CD4-positive, alpha-beta memory T cell (primary cell): ENCODE measurements at regions of chr6 and their contacts with region 1.

Region 1: DNA sequence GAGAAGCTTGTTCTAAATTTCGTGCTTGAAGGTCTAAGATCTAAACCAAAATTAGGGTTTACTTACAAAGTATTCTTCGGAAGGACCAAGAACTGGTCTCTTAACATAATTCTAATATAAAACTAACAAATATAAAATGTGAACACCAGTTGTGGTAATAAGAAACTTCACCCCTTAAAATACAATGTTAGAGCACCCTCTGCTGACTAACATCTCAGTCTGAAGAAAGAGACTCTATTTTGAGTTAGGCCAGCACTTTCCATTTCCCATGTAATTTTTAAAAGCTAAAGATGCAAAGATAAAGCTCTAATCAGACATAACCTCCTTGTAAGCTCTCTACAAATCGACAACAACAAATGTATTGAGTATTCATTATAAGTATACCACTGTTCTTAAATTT is 24.6 kb downstream of the ATG5 start:
- DNase-seq: peak in 4 of 5 donors; percentile 10 to 36 (median 25)
- H3K4me3 ChIP-seq: no peak overlapping the region
- H3K4me3 Mint-ChIP-seq: no peak overlapping the region
- H3K27ac ChIP-seq: no peak overlapping the region
- H3K27ac Mint-ChIP-seq: no peak overlapping the region
- H3K4me1 ChIP-seq: peaks cover 3% of the 10 kb centered on the region
- H3K4me1 Mint-ChIP-seq: peaks cover 6 to 12% (median 10%) of the 10 kb centered on the region in 4 donors
- H3K27me3 ChIP-seq: no peaks in the 10 kb centered on the region
- H3K27me3 Mint-ChIP-seq: no peaks in the 10 kb centered on the region

Region 2: GRCh38 chr6:105431226-105431625 is 869.7 kb before region 1 on chr6:
- CTCF ChIA-PET with region 1: interaction called, 5 read pairs
- POLR2A ChIA-PET with region 1: no interaction called
- intact Hi-C with region 1: loop called (anchors 2 kb)
- DNase-seq: peak in 4 of 5 donors; percentile 35 to 49 (median 42)
- H3K4me3 ChIP-seq: no peak overlapping the region
- H3K4me3 Mint-ChIP-seq: no peak overlapping the region
- H3K27ac ChIP-seq: no peak overlapping the region
- H3K27ac Mint-ChIP-seq: no peak overlapping the region
- H3K4me1 ChIP-seq: no peaks in the 10 kb centered on the region
- H3K4me1 Mint-ChIP-seq: no peaks in the 10 kb centered on the region
- H3K27me3 ChIP-seq: no peaks in the 10 kb centered on the region
- H3K27me3 Mint-ChIP-seq: peaks cover 0 to 2% of the 10 kb centered on the region in 2 donors

Region 3: GRCh38 chr6:105484238-105485161 is 816.4 kb before region 1 on chr6:
- CTCF ChIA-PET with region 1: interaction called, 4 read pairs
- POLR2A ChIA-PET with region 1: no interaction called
- intact Hi-C with region 1: loop called (anchors 2 kb)
- DNase-seq: peak in 4 of 5 donors; percentile 34 to 55 (median 44)
- H3K4me3 ChIP-seq: no peak overlapping the region
- H3K4me3 Mint-ChIP-seq: peak overlapping the region; percentile 20 to 71 (median 62)
- H3K27ac ChIP-seq: no peak overlapping the region
- H3K27ac Mint-ChIP-seq: peak overlapping the region in 6 of 7 donors; percentile 7 to 76 (median 60)
- H3K4me1 ChIP-seq: peaks cover 32% of the 10 kb centered on the region
- H3K4me1 Mint-ChIP-seq: peaks cover 13 to 34% (median 18%) of the 10 kb centered on the region in 4 donors
- H3K27me3 ChIP-seq: no peaks in the 10 kb centered on the region
- H3K27me3 Mint-ChIP-seq: no peaks in the 10 kb centered on the region

Region 4: GRCh38 chr6:105967917-105968584 is 332.9 kb before region 1 on chr6:
- CTCF ChIA-PET with region 1: no interaction called
- POLR2A ChIA-PET with region 1: no interaction called
- intact Hi-C with region 1: no loop called
- DNase-seq: no peak
- H3K4me3 ChIP-seq: no peak overlapping the region
- H3K4me3 Mint-ChIP-seq: no peak overlapping the region
- H3K27ac ChIP-seq: no peak overlapping the region
- H3K27ac Mint-ChIP-seq: no peak overlapping the region
- H3K4me1 ChIP-seq: no peaks in the 10 kb centered on the region
- H3K4me1 Mint-ChIP-seq: no peaks in the 10 kb centered on the region
- H3K27me3 ChIP-seq: no peaks in the 10 kb centered on the region
- H3K27me3 Mint-ChIP-seq: no peaks in the 10 kb centered on the region